Endothelial cell of umbilical vein (primary cell): ENCODE measurements at regions of chr12 and their contacts with region 1.

Region 1: GRCh38 chr12:57726151-57726883 is 12.2 kb downstream of the AGAP2 start:
- DNase-seq: peak; percentile 74
- H3K4me3 ChIP-seq: peak overlapping the region; percentile 62 to 64 (median 62)
- H3K27ac ChIP-seq: peak overlapping the region; percentile 23
- H3K4me1 ChIP-seq: peaks cover 7% of the 10 kb centered on the region
- H3K27me3 ChIP-seq: peaks cover 2 to 8% of the 10 kb centered on the region in 2 experiments
- CTCF ChIP-seq: peak; percentile 88 to 97
- POLR2A ChIP-seq: peak; percentile 79

Region 2: GRCh38 chr12:57693659-57694458 is 32.5 kb before region 1 on chr12 and contains the start of gene OS9:
- CTCF ChIA-PET with region 1: interaction called, 7 read pairs
- POLR2A ChIA-PET with region 1: no interaction called
- dilution Hi-C with region 1: no loop called
- intact Hi-C with region 1: loop called (anchors 1 kb)
- DNase-seq: peak; percentile 100
- H3K4me3 ChIP-seq: peak within 1 kb of the TSS; percentile 38 to 77 (median 72)
- H3K27ac ChIP-seq: peak within 1 kb of the TSS; percentile 36
- H3K4me1 ChIP-seq: peaks cover 7% of the 10 kb centered on the region
- H3K27me3 ChIP-seq: no peaks in the 10 kb centered on the region
- CTCF ChIP-seq: peak; percentile 65 to 66
- POLR2A ChIP-seq: peak; percentile 92
- total RNA-seq, gene OS9: 188 and 212 TPM in 2 replicates

Region 3: DNA sequence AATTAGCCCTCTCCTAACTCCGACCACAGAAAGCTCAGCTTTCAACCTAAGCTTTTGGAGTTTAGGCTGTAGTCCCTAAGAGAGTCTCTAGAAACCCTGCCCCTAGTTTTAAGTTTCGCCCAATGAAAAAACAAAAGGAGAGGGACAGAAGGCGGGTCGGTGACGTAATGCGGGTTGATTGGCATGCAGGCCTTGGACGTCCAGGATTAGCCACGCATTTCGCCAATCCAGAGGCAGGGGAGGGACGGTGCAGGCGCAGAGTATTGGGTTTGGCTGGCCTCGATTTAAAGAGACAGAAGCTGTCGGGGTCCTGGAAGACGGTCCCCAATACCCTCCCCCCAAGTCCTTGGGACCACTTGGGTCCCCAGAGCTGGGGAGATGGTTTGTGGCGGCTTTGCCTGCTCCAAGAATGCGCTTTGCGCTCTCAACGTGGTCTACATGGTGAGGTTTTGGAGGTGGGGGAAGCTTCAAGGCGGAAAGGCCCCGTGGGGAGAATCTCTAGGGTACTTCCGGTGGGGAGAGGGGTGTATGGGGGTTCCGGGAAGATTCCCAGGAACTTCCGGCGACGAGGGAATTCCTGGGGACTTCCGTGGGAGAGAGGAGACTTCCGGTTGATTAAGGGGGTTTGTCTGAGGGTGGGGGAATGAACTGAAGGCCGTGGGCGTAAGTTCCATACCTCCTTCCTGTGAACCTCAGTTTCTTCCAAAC is 18.6 kb after region 1 on chr12 and contains the start of gene TSPAN31:
- CTCF ChIA-PET with region 1: interaction called, 20 read pairs
- POLR2A ChIA-PET with region 1: no interaction called
- dilution Hi-C with region 1: no loop called
- intact Hi-C with region 1: no loop called
- DNase-seq: peak; percentile 97
- H3K4me3 ChIP-seq: peak within 1 kb of the TSS; percentile 44 to 88 (median 75)
- H3K27ac ChIP-seq: peak within 1 kb of the TSS; percentile 68
- H3K4me1 ChIP-seq: peaks cover 10% of the 10 kb centered on the region
- H3K27me3 ChIP-seq: peaks cover 14 to 16% of the 10 kb centered on the region in 2 experiments
- CTCF ChIP-seq: no peak
- POLR2A ChIP-seq: peak; percentile 48
- total RNA-seq, gene TSPAN31: 14.6 and 15.0 TPM in 2 replicates

Region 4: DNA sequence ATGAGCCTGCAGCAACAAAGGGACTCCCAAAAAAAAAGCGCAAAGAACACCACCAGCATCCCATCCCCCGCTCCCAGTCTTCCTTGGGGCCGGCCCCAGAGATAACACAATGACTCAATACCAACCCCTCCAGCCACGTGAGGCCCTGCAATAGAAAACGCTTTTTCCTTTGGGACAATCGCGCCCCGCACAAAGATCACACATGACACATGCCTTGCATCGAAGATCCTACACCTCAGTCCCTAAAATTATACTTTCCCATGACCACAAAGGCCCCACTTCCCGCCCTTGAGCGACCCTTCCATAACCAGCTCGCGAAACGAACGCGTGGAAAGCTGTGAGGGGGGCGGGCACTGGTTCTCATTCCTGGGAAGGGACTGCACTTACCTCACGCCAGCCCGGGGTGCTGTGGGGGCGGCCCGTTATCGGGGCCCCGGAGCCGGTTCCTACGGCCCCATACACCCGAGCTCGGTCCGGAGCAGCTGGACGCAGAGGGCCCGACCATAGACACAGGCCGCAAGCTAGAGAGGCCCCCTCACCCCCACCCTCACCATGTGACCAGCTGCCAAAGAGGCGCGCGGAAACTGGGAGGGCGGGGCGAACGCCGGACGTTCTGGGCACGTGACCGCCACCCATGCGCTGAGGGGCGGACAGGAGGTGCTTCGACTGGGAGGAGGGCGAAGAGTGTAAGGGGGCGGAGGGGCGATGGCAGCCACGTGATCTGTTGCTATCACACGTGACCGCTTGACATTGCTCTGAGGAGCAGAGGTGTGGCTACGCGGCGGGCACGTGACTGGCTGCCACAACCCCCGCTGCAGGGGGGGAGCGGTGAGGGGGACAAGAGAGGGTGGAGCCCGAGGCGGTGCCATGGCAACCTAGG is 25.7 kb after region 1 on chr12 and contains the start of gene CDK4:
- CTCF ChIA-PET with region 1: interaction called, 9 read pairs
- POLR2A ChIA-PET with region 1: interaction called, 3 read pairs
- dilution Hi-C with region 1: no loop called
- intact Hi-C with region 1: loop called (anchors 1 kb)
- DNase-seq: peak; percentile 100
- H3K4me3 ChIP-seq: peak within 1 kb of the TSS; percentile 19 to 78 (median 61)
- H3K27ac ChIP-seq: peak within 1 kb of the TSS; percentile 68
- H3K4me1 ChIP-seq: peaks cover 17% of the 10 kb centered on the region
- H3K27me3 ChIP-seq: peaks cover 22 to 28% of the 10 kb centered on the region in 2 experiments
- CTCF ChIP-seq: no peak
- POLR2A ChIP-seq: peak; percentile 84
- total RNA-seq, gene CDK4: 156 and 171 TPM in 2 replicates

Region 5: GRCh38 chr12:57759360-57759980 is 33.2 kb after region 1 on chr12:
- CTCF ChIA-PET with region 1: interaction called, 10 read pairs
- POLR2A ChIA-PET with region 1: interaction called, 3 read pairs
- dilution Hi-C with region 1: no loop called
- intact Hi-C with region 1: no loop called
- DNase-seq: no peak
- H3K4me3 ChIP-seq: no peak overlapping the region
- H3K27ac ChIP-seq: no peak overlapping the region
- H3K4me1 ChIP-seq: peaks cover 4% of the 10 kb centered on the region
- H3K27me3 ChIP-seq: peaks cover 29 to 30% of the 10 kb centered on the region in 2 experiments
- CTCF ChIP-seq: peak in 1 of 2 donors; percentile 36
- POLR2A ChIP-seq: no peak

Region 6: DNA sequence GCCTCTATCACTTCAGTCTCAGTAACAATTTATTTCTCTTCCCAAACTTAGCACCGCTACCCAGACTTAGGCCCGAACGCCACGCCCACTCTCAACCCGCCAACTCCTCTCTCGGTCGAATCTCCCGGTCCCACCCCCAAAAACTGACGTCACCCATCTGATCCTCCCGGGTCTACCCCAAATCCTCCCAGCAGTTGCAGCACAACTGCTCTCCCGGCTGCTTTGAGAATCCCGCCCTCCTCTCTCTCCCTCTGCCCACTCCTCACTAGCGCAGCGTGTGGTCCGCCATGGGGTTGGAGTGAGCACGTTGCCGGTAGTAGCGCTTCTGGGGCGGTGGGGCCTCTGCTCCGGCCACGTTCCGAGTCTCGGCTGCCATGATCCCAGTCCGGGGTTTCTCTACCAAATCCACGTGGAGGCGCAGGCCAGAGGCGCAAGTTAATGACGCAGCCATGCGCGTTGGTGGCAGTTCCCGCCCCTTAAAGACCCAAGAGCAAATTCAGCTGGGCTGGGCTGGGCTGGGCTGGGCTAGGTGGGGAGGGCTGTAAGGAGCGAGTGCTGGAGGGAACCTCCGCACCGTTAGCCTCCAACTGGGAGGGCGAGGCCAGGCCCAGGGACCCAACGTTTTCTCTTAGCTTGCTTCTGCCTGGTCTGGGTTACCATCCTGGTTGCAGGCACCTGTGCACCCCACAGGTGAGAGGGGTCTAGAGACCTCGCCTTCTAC is 45.6 kb after region 1 on chr12 and contains the start of gene METTL1:
- CTCF ChIA-PET with region 1: interaction called, 4 read pairs
- POLR2A ChIA-PET with region 1: no interaction called
- dilution Hi-C with region 1: no loop called
- intact Hi-C with region 1: loop called (anchors 1 kb)
- DNase-seq: peak; percentile 98
- H3K4me3 ChIP-seq: peak within 1 kb of the TSS; percentile 69 to 79 (median 76)
- H3K27ac ChIP-seq: peak within 1 kb of the TSS; percentile 79
- H3K4me1 ChIP-seq: peaks cover 13% of the 10 kb centered on the region
- H3K27me3 ChIP-seq: peaks cover under 1 to 5% of the 10 kb centered on the region in 2 experiments
- CTCF ChIP-seq: no peak
- POLR2A ChIP-seq: peak; percentile 75
- total RNA-seq, gene METTL1: 24.3 and 24.8 TPM in 2 replicates

Region 7: DNA sequence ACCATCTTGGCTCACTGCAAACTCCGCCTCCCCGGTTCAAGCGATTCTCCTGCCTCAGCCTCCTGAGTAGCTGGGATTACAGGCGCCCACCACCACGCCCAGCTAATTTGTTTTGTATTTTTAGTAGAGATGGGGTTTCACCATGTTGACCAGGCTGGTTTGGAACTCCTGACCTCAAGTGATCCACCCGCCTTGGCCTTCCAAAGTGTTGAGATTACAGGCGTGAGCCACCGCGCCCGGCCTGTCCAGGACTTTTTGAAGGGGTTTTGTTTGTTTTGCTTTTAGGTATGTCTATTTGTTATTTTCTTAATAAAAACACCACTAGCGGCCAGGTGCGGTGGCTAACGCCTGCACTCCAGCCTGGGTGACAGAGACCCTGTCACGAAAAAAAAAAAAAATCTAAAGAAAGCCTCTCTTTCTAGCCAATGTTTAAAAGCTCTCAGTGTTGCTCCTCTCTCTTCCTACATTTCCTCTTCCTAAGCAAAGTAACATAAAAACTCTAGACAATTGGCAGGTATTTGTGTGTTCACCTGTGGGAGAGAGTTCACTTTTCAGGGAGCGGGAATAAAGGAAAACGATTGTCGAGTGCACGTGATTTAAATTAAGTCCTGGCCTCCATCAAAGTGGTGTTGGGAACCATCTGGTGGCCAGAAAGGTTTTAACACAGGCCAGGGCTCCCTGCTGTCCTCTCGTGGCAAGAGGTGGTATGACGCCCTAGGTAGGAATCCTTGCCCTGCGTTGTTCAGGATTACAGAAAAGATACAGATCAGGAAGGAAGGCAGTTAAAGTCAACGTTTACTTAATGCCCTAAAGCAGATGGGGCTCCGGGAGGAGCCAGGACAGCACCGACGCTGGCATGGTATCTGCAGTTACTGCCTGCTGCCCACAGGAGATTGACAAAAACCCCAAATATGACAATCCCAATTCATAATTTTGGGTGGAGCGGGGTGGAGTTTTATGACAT is 178.8 kb after region 1 on chr12:
- CTCF ChIA-PET with region 1: no interaction called
- POLR2A ChIA-PET with region 1: no interaction called
- dilution Hi-C with region 1: no loop called
- intact Hi-C with region 1: loop called (anchors 1 kb)
- DNase-seq: peak; percentile 92
- H3K4me3 ChIP-seq: no peak overlapping the region
- H3K27ac ChIP-seq: no peak overlapping the region
- H3K4me1 ChIP-seq: peaks cover 2% of the 10 kb centered on the region
- H3K27me3 ChIP-seq: peaks cover 12 to 14% of the 10 kb centered on the region in 2 experiments
- CTCF ChIP-seq: peak; percentile 100
- POLR2A ChIP-seq: no peak